Heart left ventricle (tissue), 16 donors: ENCODE measurements at regions of chr6 and their contacts with region 1.

Region 1: GRCh38 chr6:168884646-168885086 is 369.0 kb downstream of the THBS2 start:
- DNase-seq: peak; percentile 50 to 87 (median 70)
- ATAC-seq: peak; percentile 35 to 90 (median 81)
- H3K4me3 ChIP-seq: peak overlapping the region in 9 of 12 donors; percentile 25 to 54 (median 41)
- H3K27ac ChIP-seq: peak overlapping the region in 2 of 12 donors; percentile 12 to 68
- H3K4me1 ChIP-seq: peaks cover 0 to 10% (median 0%) of the 10 kb centered on the region in 12 donors
- H3K27me3 ChIP-seq: peaks cover 0 to 22% (median 4%) of the 10 kb centered on the region in 9 donors
- CTCF ChIP-seq: peak; percentile 88 to 97 (median 93)
- POLR2A ChIP-seq: no peak

Region 2: DNA sequence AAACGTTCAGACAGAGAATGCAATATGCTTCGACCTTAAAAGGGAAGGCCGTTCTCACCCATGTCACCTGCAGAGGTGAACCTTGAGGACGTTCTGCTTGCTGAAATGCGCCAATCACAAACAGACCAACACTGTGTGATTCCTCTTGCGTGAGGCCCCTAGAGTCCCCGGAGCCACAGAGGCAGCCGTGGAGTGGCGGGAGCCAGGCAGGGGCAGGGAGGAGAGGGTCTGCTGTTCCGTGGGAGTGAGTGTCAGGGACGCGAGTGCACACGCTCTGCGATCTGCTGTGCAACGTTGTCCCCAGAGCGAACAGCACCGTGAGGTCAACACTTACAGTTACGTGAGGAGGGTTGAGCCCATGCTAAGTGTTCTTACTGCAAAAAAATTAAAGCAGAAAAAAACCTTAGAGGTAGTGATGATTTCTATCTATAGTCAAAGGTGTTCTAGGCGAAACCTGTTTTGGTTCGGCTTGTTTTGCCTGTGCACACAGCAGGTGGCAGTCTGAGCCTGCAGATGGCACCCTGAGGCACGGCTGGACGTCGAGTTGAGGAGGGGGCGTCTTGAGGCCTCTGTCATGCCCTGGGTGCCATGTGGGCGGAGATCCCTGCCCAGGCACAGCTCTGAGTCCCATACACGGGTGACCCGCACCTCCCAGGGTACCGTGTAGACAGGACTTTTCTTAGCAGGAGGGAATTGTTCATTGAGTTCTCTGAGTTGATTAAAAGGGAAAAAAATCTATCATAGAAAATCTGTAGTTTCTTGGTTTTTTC is 733.9 kb before region 1 on chr6:
- intact Hi-C with region 1: loop called in 2 of 10 experiments (anchors 5 kb)
- DNase-seq: peak in 1 of 5 donors; percentile 15
- ATAC-seq: peak in 2 of 4 donors; percentile 28 to 37
- H3K4me3 ChIP-seq: no peak overlapping the region
- H3K27ac ChIP-seq: no peak overlapping the region
- H3K4me1 ChIP-seq: peaks cover 0 to 4% (median 0%) of the 10 kb centered on the region in 12 donors
- H3K27me3 ChIP-seq: peaks cover 0 to 39% (median 6%) of the 10 kb centered on the region in 9 donors
- CTCF ChIP-seq: peak in 9 of 12 donors; percentile 6 to 57 (median 47)
- POLR2A ChIP-seq: no peak

Region 3: DNA sequence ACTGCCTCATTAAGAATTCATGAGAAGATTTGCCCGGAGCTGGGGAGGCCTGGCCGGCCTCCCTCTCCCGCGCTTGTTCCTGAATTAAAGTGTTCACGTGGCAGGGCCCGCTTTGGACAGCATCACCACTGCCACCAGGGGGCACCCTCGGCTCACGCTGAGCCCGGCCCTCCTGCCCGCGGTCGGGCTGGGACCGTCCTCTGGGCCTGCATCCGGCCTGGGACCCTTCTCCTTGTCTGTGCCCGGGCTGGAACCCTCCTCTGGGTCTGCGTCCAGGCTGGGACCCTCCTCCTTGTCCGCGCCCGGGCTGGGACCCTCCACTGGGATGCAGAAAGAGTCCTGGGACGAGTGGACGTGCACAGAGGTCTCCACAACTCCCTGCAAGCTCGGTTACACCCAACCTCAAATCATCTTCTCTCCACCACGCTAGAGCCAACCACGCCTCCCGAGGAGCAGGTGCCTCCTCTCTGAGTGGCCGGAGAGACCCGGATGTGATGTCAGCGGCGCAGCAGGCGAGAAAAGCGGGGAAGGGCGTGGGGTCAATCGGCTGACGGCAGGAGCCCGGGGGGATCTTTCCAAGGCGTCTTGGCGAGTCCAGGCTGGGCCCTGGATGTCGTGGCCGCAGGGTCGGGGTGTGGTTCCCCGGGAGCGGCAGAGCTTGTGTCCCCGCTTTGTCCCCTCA is 514.2 kb before region 1 on chr6:
- intact Hi-C with region 1: loop called (anchors 1 to 2 kb)
- DNase-seq: peak; percentile 75 to 83 (median 76)
- ATAC-seq: peak; percentile 77 to 91 (median 86)
- H3K4me3 ChIP-seq: no peak overlapping the region
- H3K27ac ChIP-seq: no peak overlapping the region
- H3K4me1 ChIP-seq: peaks cover 0 to 9% (median 0%) of the 10 kb centered on the region in 12 donors
- H3K27me3 ChIP-seq: peaks cover 0 to 26% (median 0%) of the 10 kb centered on the region in 9 donors
- CTCF ChIP-seq: peak; percentile 64 to 85 (median 79)
- POLR2A ChIP-seq: no peak

Region 4: GRCh38 chr6:168451805-168452517 is 432.7 kb before region 1 on chr6:
- intact Hi-C with region 1: loop called in 1 of 10 experiments (anchors 2 kb)
- DNase-seq: no peak
- ATAC-seq: peak in 1 of 4 donors; percentile 33
- H3K4me3 ChIP-seq: no peak overlapping the region
- H3K27ac ChIP-seq: peak overlapping the region in 5 of 12 donors; percentile 6 to 60 (median 45)
- H3K4me1 ChIP-seq: peaks cover 0 to 46% (median 9%) of the 10 kb centered on the region in 12 donors
- H3K27me3 ChIP-seq: peaks cover 0 to 3% (median 0%) of the 10 kb centered on the region in 9 donors
- CTCF ChIP-seq: peak in 9 of 12 donors; percentile 13 to 51 (median 27)
- POLR2A ChIP-seq: no peak

Region 5: GRCh38 chr6:168616816-168617765 is 267.6 kb before region 1 on chr6:
- intact Hi-C with region 1: loop called in 8 of 10 experiments (anchors 1 to 10 kb)
- DNase-seq: peak in 2 of 5 donors; percentile 31 to 66
- ATAC-seq: peak; percentile 37 to 75 (median 64)
- H3K4me3 ChIP-seq: no peak overlapping the region
- H3K27ac ChIP-seq: peak overlapping the region in 5 of 12 donors; percentile 39 to 57 (median 46)
- H3K4me1 ChIP-seq: peaks cover 0 to 11% (median 2%) of the 10 kb centered on the region in 12 donors
- H3K27me3 ChIP-seq: no peaks in the 10 kb centered on the region
- CTCF ChIP-seq: peak in 9 of 12 donors; percentile 19 to 48 (median 34)
- POLR2A ChIP-seq: no peak

Region 6: DNA sequence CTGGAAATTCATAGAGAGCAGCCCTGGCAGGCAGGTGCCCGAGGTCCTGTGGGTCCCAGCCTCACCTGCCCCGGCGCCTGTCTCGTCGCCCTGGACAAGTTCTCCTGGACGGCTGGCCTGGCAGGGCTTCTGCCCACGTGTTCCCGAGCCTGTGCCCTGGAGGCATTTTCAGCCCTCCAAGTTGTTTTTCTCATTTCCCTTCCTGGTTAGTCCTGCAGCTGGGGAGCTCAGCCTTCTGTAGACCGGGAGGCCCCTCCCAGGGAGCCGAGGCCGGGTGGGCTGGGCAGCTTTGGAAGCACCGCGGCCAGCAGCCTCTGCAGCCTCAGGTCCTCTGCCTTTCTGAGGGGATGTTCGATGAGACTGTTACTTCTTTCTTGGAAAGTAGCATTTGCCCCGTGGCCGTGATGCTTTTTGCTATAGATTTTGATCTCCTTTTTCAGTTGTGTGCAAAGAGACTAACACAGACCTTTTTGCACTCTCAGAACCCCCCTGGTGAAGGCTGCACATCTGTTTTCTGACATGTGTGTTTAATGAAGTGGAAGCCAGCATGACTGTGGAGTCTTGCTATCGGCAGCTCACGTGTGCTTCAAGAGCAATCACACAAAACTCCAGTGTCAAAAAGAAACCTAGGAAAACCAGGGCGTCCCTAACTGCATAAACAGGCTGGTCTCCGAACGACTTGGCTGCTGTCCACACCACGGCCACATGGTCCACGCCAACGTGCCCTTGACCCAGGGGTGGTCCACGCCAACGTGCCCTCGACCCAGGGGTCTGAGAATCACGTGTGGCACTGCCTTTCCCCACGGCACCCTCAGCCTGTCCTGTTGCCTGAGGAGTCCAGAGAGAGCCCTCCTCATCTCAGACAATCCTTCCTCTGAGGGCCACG is 236.2 kb before region 1 on chr6:
- intact Hi-C with region 1: loop called in 1 of 10 experiments (anchors 10 kb)
- DNase-seq: peak in 1 of 5 donors; percentile 49
- ATAC-seq: peak in 3 of 4 donors; percentile 27 to 62 (median 52)
- H3K4me3 ChIP-seq: peak overlapping the region in 1 of 12 donors; percentile 8
- H3K27ac ChIP-seq: peak overlapping the region in 1 of 12 donors; percentile 19
- H3K4me1 ChIP-seq: peaks cover 0 to 14% (median 0%) of the 10 kb centered on the region in 12 donors
- H3K27me3 ChIP-seq: peaks cover 0 to 21% (median 0%) of the 10 kb centered on the region in 9 donors
- CTCF ChIP-seq: no peak
- POLR2A ChIP-seq: no peak